ENCODE measurements at regions of chr1 and their contacts with region 1.

Region 1: GRCh38 chr1:44799770-44800584 is at the start of gene PLK3:
- DNase-seq: peak; percentile 100
- total RNA-seq, gene PLK3: 8.4 TPM

Region 2: GRCh38 chr1:44819608-44820327 is 19.8 kb after region 1 on chr1:
- intact Hi-C with region 1: loop called (anchors 2 kb)
- DNase-seq: peak; percentile 86

Region 3: DNA sequence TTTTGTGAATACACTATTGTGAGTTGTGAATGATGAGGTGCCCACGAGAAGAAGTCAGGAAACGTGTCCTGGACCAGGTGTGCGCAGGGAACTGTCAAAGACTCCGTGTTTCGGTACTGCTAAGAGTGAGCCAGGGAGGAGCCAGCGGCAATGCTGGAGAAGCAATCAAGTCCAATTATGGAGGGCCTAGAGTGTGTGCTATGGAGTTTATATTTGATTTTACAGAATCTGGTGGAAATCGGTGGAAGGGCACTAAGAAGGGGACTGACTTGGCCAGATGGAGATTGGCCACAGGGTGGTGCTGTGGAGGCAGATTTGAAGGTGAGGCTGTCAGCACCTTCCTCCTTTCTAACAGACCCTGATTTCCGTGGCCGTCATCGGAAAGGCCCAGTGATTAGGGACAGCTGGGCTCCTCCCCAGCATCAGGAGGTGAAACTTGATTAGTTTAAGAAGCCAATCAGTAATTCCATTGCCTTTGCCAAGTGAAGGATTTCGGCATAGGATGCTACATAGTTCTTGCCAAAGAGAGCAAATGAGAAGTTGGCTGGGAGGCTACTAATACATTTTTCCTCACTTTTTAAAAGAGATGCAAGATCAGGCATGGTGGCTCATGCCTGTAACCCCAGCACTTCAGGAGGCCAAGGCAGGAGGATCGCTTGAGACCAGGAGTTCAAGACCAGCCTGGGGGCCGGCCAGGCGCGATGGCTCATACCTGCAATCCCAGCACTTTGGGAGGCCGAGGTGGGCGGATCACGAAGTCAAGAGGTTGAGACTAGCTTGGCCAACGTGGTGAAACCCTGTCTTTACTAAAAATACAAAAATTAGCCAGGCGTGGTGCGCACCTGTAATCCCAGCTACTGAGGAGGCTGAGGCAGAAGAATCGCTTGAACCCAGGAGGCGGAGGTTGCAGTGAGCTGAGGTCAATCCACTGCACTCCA is 36.0 kb after region 1 on chr1:
- intact Hi-C with region 1: loop called (anchors 2 kb)
- DNase-seq: peak; percentile 91

Region 4: GRCh38 chr1:45097944-45098343 is 298.0 kb after region 1 on chr1:
- intact Hi-C with region 1: no loop called
- DNase-seq: no peak

Measured in cardiac septum (tissue), 1 donor.